B cell (primary cell): ENCODE measurements at regions of chr7 and their contacts with region 1.

Region 1: DNA sequence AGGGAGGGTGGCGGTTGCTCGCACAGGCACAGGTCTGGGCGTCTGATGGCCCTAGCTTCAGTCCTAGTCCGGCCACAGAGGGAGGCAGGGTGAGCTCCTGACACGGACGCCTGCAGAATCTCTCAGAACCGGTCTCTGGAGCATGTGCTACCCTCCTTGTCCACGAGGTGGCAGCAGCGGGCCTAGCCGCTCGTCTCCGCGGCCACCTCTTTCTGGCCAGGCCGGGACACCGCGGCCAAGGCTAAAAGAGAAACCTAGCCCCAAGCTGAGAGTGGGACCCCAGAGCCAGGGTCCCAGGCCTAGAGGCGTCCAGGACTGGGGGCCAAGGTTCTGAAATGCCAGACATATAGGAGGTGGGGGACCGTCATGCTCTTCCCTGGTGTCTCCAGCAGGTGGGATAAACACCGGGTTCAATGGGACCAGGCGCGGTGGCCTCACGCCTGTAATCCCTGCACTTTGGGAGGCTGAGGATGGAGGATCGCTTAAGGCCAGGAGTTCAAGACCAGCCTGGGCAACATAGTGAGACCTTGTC is 3.2 kb upstream of the LAT2 start:
- DNase-seq: peak; percentile 89
- ATAC-seq: peak; percentile 52
- H3K4me3 ChIP-seq: peak overlapping the region in 3 of 5 experiments; percentile 43 to 57 (median 46)
- H3K4me3 Mint-ChIP-seq: peak overlapping the region; percentile 74
- H3K27ac ChIP-seq: no peak overlapping the region
- H3K27ac Mint-ChIP-seq: no peak overlapping the region
- H3K4me1 ChIP-seq: peaks cover 27 to 48% of the 10 kb centered on the region in 2 donors
- H3K4me1 Mint-ChIP-seq: peaks cover 54% of the 10 kb centered on the region
- H3K27me3 ChIP-seq: no peaks in the 10 kb centered on the region
- H3K27me3 Mint-ChIP-seq: no peaks in the 10 kb centered on the region
- CTCF ChIP-seq: peak; percentile 98

Region 2: DNA sequence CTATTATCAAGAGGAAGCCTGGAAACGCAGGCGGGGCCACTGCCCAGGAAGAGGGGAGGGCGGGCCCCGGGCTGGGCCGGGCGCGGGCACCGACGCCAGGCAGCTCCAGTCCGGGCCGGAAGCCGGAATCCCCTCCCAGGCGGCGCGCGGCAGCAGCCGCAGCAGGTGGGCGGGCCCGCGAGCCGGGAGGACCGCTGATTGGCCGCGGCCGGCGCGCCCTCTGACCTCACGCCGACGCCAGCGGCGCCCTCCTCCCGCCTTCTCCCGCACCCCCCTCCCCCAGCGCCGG is 649.6 kb before region 1 on chr7:
- CTCF ChIA-PET with region 1: no interaction called
- POLR2A ChIA-PET with region 1: no interaction called
- intact Hi-C with region 1: no loop called
- DNase-seq: no peak
- ATAC-seq: peak; percentile 89
- H3K4me3 ChIP-seq: peak overlapping the region; percentile 69 to 86 (median 82)
- H3K4me3 Mint-ChIP-seq: peak overlapping the region; percentile 92
- H3K27ac ChIP-seq: peak overlapping the region; percentile 92 to 99
- H3K27ac Mint-ChIP-seq: peak overlapping the region; percentile 93
- H3K4me1 ChIP-seq: peaks cover 14 to 21% of the 10 kb centered on the region in 2 donors
- H3K4me1 Mint-ChIP-seq: peaks cover 30% of the 10 kb centered on the region
- H3K27me3 ChIP-seq: no peaks in the 10 kb centered on the region
- H3K27me3 Mint-ChIP-seq: no peaks in the 10 kb centered on the region
- CTCF ChIP-seq: no peak

Region 3: DNA sequence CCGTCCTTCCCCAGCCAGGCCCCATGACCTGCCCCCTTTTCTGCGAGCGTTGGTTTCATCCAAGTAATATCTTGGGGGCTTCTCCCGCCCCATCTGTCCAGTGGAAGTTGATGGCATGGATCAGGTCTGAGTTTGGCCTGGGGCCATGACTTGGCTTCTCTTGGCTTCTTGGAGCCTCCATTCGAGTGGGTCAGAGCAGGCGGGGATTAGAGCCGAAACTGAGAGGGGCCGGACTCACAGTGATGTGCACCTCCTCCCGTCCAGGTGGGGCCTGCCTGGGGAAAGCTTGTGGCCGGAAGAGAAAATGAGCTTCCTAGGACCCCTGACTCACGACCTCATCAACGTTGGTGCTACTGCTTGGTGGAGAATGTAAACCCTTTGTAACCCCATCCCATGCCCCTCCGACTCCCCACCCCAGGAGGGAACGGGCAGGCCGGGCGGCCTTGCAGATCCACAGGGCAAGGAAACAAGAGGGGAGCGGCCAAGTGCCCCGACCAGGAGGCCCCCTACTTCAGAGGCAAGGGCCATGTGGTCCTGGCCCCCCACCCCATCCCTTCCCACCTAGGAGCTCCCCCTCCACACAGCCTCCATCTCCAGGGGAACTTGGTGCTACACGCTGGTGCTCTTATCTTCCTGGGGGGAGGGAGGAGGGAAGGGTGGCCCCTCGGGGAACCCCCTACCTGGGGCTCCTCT is 138.1 kb before region 1 on chr7:
- CTCF ChIA-PET with region 1: interaction called, 55 read pairs
- POLR2A ChIA-PET with region 1: no interaction called
- intact Hi-C with region 1: loop called (anchors 1 kb)
- DNase-seq: peak; percentile 17
- ATAC-seq: no peak
- H3K4me3 ChIP-seq: no peak overlapping the region
- H3K4me3 Mint-ChIP-seq: no peak overlapping the region
- H3K27ac ChIP-seq: no peak overlapping the region
- H3K27ac Mint-ChIP-seq: no peak overlapping the region
- H3K4me1 ChIP-seq: peaks cover 0 to 3% of the 10 kb centered on the region in 2 donors
- H3K4me1 Mint-ChIP-seq: no peaks in the 10 kb centered on the region
- H3K27me3 ChIP-seq: no peaks in the 10 kb centered on the region
- H3K27me3 Mint-ChIP-seq: no peaks in the 10 kb centered on the region
- CTCF ChIP-seq: no peak

Region 4: GRCh38 chr7:74217455-74218342 is 11.0 kb after region 1 on chr7:
- CTCF ChIA-PET with region 1: interaction called, 39 read pairs
- POLR2A ChIA-PET with region 1: interaction called, 3 read pairs
- intact Hi-C with region 1: loop called (anchors 1 kb)
- DNase-seq: peak; percentile 81
- ATAC-seq: peak; percentile 58
- H3K4me3 ChIP-seq: peak overlapping the region in 2 of 5 experiments; percentile 31 to 38
- H3K4me3 Mint-ChIP-seq: peak overlapping the region; percentile 81
- H3K27ac ChIP-seq: peak overlapping the region; percentile 64 to 70
- H3K27ac Mint-ChIP-seq: peak overlapping the region; percentile 92
- H3K4me1 ChIP-seq: peaks cover 46 to 67% of the 10 kb centered on the region in 2 donors
- H3K4me1 Mint-ChIP-seq: peaks cover 51% of the 10 kb centered on the region
- H3K27me3 ChIP-seq: no peaks in the 10 kb centered on the region
- H3K27me3 Mint-ChIP-seq: no peaks in the 10 kb centered on the region
- CTCF ChIP-seq: no peak

Region 5: GRCh38 chr7:74242122-74242443 is 35.4 kb after region 1 on chr7:
- CTCF ChIA-PET with region 1: interaction called, 33 read pairs
- POLR2A ChIA-PET with region 1: interaction called, 5 read pairs
- intact Hi-C with region 1: loop called (anchors 5 kb)
- DNase-seq: no peak
- ATAC-seq: peak; percentile 23
- H3K4me3 ChIP-seq: peak overlapping the region in 3 of 5 experiments; percentile 0 to 45 (median 33)
- H3K4me3 Mint-ChIP-seq: peak overlapping the region; percentile 88
- H3K27ac ChIP-seq: no peak overlapping the region
- H3K27ac Mint-ChIP-seq: peak overlapping the region; percentile 88
- H3K4me1 ChIP-seq: peaks cover 35 to 39% of the 10 kb centered on the region in 2 donors
- H3K4me1 Mint-ChIP-seq: peaks cover 28% of the 10 kb centered on the region
- H3K27me3 ChIP-seq: no peaks in the 10 kb centered on the region
- H3K27me3 Mint-ChIP-seq: no peaks in the 10 kb centered on the region
- CTCF ChIP-seq: no peak

Region 6: GRCh38 chr7:74272305-74273038 is 65.8 kb after region 1 on chr7:
- CTCF ChIA-PET with region 1: interaction called, 26 read pairs
- POLR2A ChIA-PET with region 1: interaction called, 11 read pairs
- intact Hi-C with region 1: loop called (anchors 1 kb)
- DNase-seq: peak; percentile 65
- ATAC-seq: peak; percentile 70
- H3K4me3 ChIP-seq: peak overlapping the region in 2 of 5 experiments; percentile 5 to 18
- H3K4me3 Mint-ChIP-seq: peak overlapping the region; percentile 85
- H3K27ac ChIP-seq: no peak overlapping the region
- H3K27ac Mint-ChIP-seq: peak overlapping the region; percentile 87
- H3K4me1 ChIP-seq: peaks cover 16 to 44% of the 10 kb centered on the region in 2 donors
- H3K4me1 Mint-ChIP-seq: peaks cover 39% of the 10 kb centered on the region
- H3K27me3 ChIP-seq: no peaks in the 10 kb centered on the region
- H3K27me3 Mint-ChIP-seq: no peaks in the 10 kb centered on the region
- CTCF ChIP-seq: no peak

Region 7: DNA sequence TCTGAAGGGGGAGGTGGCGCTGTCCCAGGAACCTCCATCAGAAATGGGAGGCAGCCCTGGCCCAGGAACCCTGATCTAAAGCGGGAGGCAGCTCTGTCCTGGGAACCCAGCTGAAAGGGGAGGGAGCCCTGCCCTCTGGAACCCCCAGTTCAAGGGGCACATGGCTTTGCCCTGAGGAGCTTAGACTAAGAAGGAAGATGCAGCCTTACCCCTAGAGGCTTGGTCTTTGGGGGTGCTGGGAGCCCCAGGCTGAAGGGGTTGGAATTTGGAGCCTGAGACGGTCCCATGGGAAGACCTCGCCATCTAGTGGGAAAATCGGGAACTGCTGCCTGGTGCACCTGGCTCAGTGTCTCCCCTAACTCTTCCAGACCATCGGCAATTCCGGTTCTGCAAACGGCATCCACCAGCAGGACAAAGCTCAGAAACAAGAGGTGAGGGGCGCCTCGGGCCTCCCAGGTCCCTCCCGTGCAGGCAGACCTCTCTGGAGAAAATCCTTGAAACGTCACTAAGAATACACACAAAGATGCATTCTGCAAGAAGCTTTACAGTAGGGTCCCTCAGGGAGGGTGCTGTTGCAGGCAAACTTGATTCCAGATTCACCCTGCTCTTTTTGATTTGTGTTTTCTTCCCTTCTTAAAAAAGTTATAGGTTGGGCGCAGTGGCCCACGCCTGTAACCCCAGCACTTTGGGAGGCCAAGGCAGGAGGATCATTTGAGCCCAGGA is 194.6 kb after region 1 on chr7:
- CTCF ChIA-PET with region 1: interaction called, 246 read pairs
- POLR2A ChIA-PET with region 1: interaction called, 3 read pairs
- intact Hi-C with region 1: loop called (anchors 1 kb)
- DNase-seq: peak; percentile 82
- ATAC-seq: peak; percentile 78
- H3K4me3 ChIP-seq: no peak overlapping the region
- H3K4me3 Mint-ChIP-seq: no peak overlapping the region
- H3K27ac ChIP-seq: no peak overlapping the region
- H3K27ac Mint-ChIP-seq: no peak overlapping the region
- H3K4me1 ChIP-seq: no peaks in the 10 kb centered on the region
- H3K4me1 Mint-ChIP-seq: no peaks in the 10 kb centered on the region
- H3K27me3 ChIP-seq: no peaks in the 10 kb centered on the region
- H3K27me3 Mint-ChIP-seq: no peaks in the 10 kb centered on the region
- CTCF ChIP-seq: peak; percentile 89